ENCODE measurements at regions of chr10 and their contacts with region 1.

Region 1: DNA sequence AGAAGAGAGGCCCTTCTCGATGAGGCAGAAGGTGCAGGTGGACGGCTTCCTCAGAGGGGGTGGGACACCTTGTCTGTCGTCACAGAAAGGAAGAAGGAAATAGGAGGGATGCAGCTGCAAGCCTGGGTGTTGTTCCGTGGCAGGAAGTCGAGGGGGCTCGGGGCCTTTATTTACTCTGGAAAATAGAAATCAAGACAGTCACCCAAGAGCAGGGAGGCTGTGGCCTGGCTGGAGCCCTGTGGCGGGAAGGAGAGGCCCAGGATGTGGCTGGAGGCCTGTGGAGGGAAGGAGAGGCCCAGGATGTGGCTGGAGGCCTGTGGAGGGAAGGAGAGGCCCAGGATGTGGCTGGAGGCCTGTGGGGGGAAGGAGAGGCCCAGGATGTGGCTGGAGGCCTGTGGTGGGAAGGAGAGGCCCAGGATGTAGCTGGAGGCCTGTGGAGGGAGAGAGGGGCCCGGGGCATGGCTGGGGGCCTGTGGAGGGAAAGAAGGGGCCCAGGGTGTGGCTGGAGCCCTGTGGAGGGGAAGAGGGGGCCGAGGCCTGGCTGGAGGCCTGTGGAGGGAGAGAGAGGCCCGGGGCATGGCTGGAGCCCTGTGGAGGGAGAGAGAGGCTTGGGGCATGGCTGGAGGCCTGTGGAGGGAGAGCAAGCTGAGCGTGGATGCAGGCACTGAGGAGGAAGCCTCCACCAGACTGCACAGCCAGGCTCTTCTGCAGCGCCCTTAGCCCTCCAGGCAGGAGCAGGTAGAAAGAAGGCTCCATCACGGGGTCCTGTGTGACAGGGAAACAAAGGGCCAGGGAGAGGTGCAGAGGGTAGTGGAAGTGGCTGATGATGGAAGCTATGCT is 97.3 kb upstream of the SFMBT2 start:
- DNase-seq: peak; percentile 75
- H3K4me3 Mint-ChIP-seq: peak overlapping the region; percentile 13
- H3K27ac Mint-ChIP-seq: peak overlapping the region; percentile 77
- H3K4me1 Mint-ChIP-seq: peaks cover 30% of the 10 kb centered on the region
- H3K27me3 Mint-ChIP-seq: no peaks in the 10 kb centered on the region

Region 2: DNA sequence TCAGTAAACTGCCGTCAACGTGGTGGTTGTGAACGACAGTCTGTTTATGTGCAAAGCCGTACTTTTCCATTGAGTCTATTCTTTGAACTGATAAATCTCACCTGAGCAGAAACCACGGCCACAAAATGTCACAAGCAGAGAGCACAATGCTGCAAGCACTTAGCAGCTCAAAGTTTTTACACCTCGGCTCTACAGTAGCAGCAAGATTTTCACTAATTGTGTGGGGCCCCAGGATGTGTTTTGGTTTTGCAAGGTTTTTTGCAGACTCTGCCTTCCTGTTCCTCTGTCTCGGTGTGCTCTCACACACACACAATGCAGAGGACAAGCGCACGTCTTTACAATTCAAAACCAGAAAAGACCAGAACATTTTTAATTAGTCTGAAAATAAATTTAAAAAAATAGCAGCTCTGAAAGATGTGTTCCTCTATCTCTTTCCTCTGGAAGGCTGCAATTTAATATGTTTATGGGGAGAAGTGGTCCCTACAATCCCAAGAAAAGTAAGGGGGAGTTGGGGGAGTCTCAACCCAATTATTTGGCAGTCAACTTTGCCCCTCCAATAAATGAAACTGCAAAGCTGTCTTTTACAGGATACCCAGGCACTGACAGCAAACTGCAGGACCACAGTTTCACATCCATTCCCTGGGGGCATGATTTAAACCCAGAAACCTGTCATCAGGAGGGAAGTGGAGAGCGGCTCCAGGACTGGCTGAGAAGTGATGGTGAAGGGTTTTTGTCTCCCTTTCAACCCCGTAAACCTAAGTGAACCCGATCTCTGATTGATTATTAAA is 23.5 kb before region 1 on chr10:
- CTCF ChIA-PET with region 1: no interaction called
- POLR2A ChIA-PET with region 1: no interaction called
- intact Hi-C with region 1: loop called (anchors 2 kb)
- DNase-seq: peak; percentile 69
- H3K4me3 Mint-ChIP-seq: peak overlapping the region; percentile 56
- H3K27ac Mint-ChIP-seq: peak overlapping the region; percentile 73
- H3K4me1 Mint-ChIP-seq: peaks cover 62% of the 10 kb centered on the region
- H3K27me3 Mint-ChIP-seq: no peaks in the 10 kb centered on the region

Region 3: GRCh38 chr10:7649673-7650300 is 141.7 kb after region 1 on chr10:
- CTCF ChIA-PET with region 1: no interaction called
- POLR2A ChIA-PET with region 1: no interaction called
- intact Hi-C with region 1: no loop called
- DNase-seq: no peak
- H3K4me3 Mint-ChIP-seq: no peak overlapping the region
- H3K27ac Mint-ChIP-seq: no peak overlapping the region
- H3K4me1 Mint-ChIP-seq: no peaks in the 10 kb centered on the region
- H3K27me3 Mint-ChIP-seq: peaks cover 10% of the 10 kb centered on the region